Dendritic cell treated with granulocyte-macrophage colony-stimulating factor and Interleukin-4, amounts not matched to agents 40 ng/mL and 50 ng/mL, for 4 days (primary cell): ENCODE measurements at regions of chr5 and their contacts with region 1.

Region 1: GRCh38 chr5:154857530-154858296 is 714 bp upstream of the CNOT8 start:
- H3K4me3 Mint-ChIP-seq: peak overlapping the region; percentile 99
- H3K27ac Mint-ChIP-seq: peak overlapping the region; percentile 98
- H3K4me1 Mint-ChIP-seq: peaks cover 42% of the 10 kb centered on the region
- H3K27me3 Mint-ChIP-seq: no peaks in the 10 kb centered on the region

Region 2: DNA sequence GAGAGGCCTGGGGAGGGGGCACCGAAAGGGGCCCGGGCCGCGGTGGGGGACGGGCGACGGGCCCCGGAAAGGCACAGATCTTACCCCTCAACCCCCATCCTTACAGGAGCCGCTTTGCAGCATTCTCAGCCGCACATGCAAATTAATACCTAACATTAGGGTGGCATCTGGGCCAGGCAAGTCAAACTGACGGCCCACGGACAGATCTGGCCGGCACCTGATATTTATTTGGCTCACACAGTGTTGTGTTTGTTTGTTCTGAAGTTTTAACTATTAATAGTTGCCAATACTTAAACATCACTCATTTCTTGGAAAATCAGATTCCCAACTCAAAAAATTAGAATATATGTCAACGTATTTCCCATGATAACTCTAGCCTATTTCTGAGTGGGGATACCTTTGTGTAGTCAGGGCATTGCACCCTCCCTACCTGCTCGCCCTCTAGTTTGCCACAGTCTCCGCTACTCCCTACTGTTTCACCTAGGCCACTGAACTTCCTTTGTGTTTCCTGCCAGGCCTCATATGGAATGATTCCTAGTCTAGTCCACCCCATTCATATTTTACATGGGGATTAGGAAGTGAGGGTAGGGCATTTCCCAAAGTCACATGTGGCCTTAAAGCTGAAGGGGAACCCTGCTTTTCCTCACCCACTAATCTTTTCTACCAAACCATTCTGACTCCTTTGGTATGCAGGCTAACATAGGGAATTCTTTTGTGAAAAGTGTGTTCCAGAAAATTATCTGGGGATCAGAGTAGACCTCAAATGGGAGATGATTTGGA is 174.4 kb before region 1 on chr5:
- intact Hi-C with region 1: loop called (anchors 1 kb)
- H3K4me3 Mint-ChIP-seq: peak overlapping the region; percentile 84
- H3K27ac Mint-ChIP-seq: peak overlapping the region; percentile 94
- H3K4me1 Mint-ChIP-seq: peaks cover 37% of the 10 kb centered on the region
- H3K27me3 Mint-ChIP-seq: no peaks in the 10 kb centered on the region

Region 3: GRCh38 chr5:154820383-154820782 is 37.3 kb before region 1 on chr5:
- intact Hi-C with region 1: loop called (anchors 5 kb)
- H3K4me3 Mint-ChIP-seq: no peak overlapping the region
- H3K27ac Mint-ChIP-seq: no peak overlapping the region
- H3K4me1 Mint-ChIP-seq: peaks cover 16% of the 10 kb centered on the region
- H3K27me3 Mint-ChIP-seq: no peaks in the 10 kb centered on the region

Region 4: GRCh38 chr5:154899151-154899816 is 41.6 kb after region 1 on chr5:
- intact Hi-C with region 1: no loop called
- H3K4me3 Mint-ChIP-seq: no peak overlapping the region
- H3K27ac Mint-ChIP-seq: no peak overlapping the region
- H3K4me1 Mint-ChIP-seq: no peaks in the 10 kb centered on the region
- H3K27me3 Mint-ChIP-seq: no peaks in the 10 kb centered on the region